Adrenal gland (tissue), 19 donors: ENCODE measurements at regions of chr19 and their contacts with region 1.

Region 1: GRCh38 chr19:10870955-10871603 is at the start of gene CARM1:
- DNase-seq: peak; percentile 99 to 100 (median 99)
- H3K4me3 ChIP-seq: peak within 1 kb of the TSS; percentile 56 to 99 (median 68)
- H3K27ac ChIP-seq: peak within 1 kb of the TSS in 3 of 5 donors; percentile 59 to 94 (median 70)
- H3K4me1 ChIP-seq: peaks cover 6 to 21% of the 10 kb centered on the region in 2 donors
- H3K27me3 ChIP-seq: no peaks in the 10 kb centered on the region
- CTCF ChIP-seq: peak in 5 of 6 experiments; percentile 6 to 97 (median 58)
- POLR2A ChIP-seq: no peak
- total RNA-seq, gene CARM1: 8.2 to 36.3 (median 22.0) TPM

Region 2: DNA sequence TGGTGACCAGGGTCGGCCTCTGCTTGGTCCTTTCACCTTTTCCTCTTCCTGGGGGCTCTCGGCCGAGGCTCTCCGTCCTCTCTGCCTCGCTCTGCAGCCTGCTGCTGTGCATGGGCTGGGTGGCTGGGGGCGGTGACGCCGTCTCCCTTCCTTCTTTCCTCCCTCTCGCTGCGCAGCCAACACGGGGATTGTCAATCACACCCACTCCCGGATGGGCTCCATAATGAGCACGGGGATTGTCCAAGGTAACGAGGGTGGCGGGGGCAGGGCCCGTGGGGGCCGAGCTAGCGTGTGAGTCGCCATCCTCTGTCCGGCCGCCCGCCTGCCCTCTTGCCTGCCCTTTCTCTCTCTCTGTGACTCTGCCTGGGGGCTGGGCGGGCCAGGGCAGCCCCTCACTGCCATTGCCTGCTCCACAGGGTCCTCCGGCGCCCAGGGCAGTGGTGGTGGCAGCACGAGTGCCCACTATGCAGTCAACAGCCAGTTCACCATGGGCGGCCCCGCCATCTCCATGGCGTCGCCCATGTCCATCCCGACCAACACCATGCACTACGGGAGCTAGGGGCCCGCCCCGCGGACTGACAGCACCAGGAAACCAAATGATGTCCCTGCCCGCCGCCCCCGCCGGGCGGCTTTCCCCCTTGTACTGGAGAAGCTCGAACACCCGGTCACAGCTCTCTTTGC is 50.3 kb after region 1 on chr19:
- intact Hi-C with region 1: loop called (anchors 5 kb)
- DNase-seq: peak in 1 of 7 donors; percentile 25
- H3K4me3 ChIP-seq: no peak overlapping the region
- H3K27ac ChIP-seq: no peak overlapping the region
- H3K4me1 ChIP-seq: peaks cover 0 to 8% of the 10 kb centered on the region in 2 donors
- H3K27me3 ChIP-seq: no peaks in the 10 kb centered on the region
- CTCF ChIP-seq: no peak
- POLR2A ChIP-seq: no peak

Region 3: DNA sequence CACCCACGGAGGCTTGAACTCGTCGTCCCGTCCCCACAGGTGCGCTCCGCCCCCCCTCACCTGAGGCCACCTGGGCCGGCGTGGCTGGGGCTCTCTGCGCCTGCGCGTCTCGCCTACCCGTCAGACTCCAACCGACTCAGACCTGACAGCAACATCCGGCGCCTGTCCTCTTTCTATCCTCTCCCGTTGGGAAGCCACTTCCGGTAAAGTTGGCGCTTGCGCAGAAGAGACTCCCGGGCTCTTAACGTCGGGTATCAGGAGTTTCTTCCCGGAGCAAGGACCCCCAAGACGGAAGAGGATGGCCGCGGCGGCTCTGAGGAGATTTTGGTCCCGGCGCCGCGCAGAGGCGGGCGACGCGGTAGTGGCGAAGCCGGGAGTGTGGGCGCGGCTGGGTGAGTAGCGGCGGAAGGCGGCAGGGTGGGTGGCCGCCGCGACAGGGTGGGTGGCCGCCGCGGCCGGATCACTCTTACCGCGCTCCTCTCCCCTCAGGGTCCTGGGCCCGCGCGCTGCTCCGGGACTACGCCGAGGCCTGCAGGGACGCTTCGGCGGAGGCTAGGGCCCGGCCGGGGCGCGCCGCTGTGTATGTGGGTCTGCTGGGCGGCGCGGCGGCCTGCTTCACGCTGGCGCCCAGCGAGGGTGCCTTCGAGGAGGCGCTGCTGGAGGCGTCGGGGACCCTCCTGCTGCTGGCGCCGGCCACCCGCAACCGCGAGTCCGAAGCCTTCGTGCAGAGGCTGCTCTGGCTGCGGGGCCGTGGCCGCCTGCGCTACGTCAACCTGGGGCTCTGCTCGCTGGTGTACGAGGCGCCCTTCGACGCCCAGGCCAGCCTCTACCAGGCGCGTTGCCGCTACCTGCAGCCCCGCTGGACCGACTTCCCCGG is 57.7 kb after region 1 on chr19 and contains the starts of genes TIMM29 and YIPF2:
- intact Hi-C with region 1: loop called (anchors 5 kb)
- DNase-seq: peak; percentile 96 to 99 (median 98)
- H3K4me3 ChIP-seq: peak within 1 kb of the TSS; percentile 36 to 97 (median 73)
- H3K27ac ChIP-seq: peak within 1 kb of the TSS in 4 of 5 donors; percentile 78 to 93 (median 84)
- H3K4me1 ChIP-seq: peaks cover 14 to 28% of the 10 kb centered on the region in 2 donors
- H3K27me3 ChIP-seq: no peaks in the 10 kb centered on the region
- CTCF ChIP-seq: no peak
- POLR2A ChIP-seq: peak; percentile 28 to 91
- total RNA-seq, gene TIMM29: 18.5 to 39.7 (median 28.3) TPM
- total RNA-seq, gene YIPF2: 54.5 to 99.1 (median 74.4) TPM

Region 4: GRCh38 chr19:10946964-10947657 is 76.0 kb after region 1 on chr19:
- intact Hi-C with region 1: no loop called
- DNase-seq: no peak
- H3K4me3 ChIP-seq: no peak overlapping the region
- H3K27ac ChIP-seq: no peak overlapping the region
- H3K4me1 ChIP-seq: no peaks in the 10 kb centered on the region
- H3K27me3 ChIP-seq: no peaks in the 10 kb centered on the region
- CTCF ChIP-seq: no peak
- POLR2A ChIP-seq: no peak

Region 5: DNA sequence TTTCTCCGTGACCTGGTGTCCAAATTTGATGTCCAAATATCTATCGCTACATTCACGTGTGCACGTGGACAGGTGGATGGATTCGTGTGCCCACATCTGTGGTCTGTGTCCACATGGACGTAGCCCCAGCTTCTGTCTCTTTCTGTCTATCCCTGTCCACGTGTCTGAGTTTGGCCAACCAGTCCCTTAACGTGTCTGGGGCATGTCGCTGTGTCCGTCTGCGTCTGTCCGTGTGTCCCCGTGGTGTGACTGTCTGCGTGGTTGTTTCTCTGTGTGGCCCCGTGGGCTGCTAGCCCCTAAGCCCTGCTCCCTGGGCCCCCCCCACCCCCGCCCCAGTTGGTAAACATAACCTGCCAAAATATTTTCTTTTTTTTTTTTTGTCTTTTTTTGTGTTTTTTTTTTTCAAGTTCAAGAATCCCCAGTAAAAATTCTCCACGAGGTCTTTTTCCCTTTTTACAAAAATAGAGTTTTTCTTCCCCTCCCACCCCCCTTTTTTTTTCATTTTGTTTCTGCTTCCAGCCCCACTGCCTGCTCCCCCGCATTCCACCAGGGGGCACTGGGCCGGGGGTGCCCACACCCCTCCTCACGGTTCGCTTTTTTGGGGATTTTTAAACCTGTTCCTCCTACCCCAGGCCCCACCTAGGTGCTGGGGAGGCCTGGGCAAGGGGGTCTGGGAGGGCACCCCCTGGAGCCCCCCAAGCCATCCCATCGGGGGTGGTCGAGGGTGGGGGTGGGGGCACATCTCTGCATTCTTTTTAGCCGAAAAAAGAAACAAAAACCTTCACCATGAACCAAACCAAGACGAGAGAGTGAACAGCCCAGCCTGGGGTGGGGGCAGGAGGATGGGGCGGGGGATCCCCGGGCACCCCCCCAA is 582.6 kb after region 1 on chr19:
- intact Hi-C with region 1: no loop called
- DNase-seq: no peak
- H3K4me3 ChIP-seq: peak overlapping the region in 2 of 4 donors; percentile 11 to 35
- H3K27ac ChIP-seq: peak overlapping the region in 1 of 5 donors; percentile 70
- H3K4me1 ChIP-seq: peaks cover 0 to 5% of the 10 kb centered on the region in 2 donors
- H3K27me3 ChIP-seq: no peaks in the 10 kb centered on the region
- CTCF ChIP-seq: peak in 5 of 6 experiments; percentile 18 to 37 (median 30)
- POLR2A ChIP-seq: no peak